HepG2 (cell line): ENCODE measurements at regions of chr16 and their contacts with region 1.

Region 1: GRCh38 chr16:2251483-2252240 is at the start of gene ECI1:
- DNase-seq: peak; percentile 87
- ATAC-seq: peak; percentile 90
- H3K4me3 ChIP-seq: peak within 1 kb of the TSS; percentile 71 to 84 (median 75)
- H3K27ac ChIP-seq: peak within 1 kb of the TSS; percentile 83
- H3K4me1 ChIP-seq: peaks cover 27% of the 10 kb centered on the region
- H3K27me3 ChIP-seq: no peaks in the 10 kb centered on the region; a peak in 1 of 5 replicates
- CTCF ChIP-seq: peak; percentile 98
- EP300 ChIP-seq: peak in 1 of 2 experiments; percentile 36; a peak in 2 of 4 replicates
- POLR2A ChIP-seq: peak; percentile 85 to 95
- RAD21 ChIP-seq: peak; percentile 94
- total RNA-seq, gene ECI1: 73.8 and 82.0 TPM in 2 replicates

Region 2: GRCh38 chr16:2090777-2091546 is 160.7 kb before region 1 on chr16:
- CTCF ChIA-PET with region 1: no interaction called
- POLR2A ChIA-PET with region 1: no interaction called
- in situ Hi-C with region 1: no loop called
- intact Hi-C with region 1: no loop called
- DNase-seq: no peak
- ATAC-seq: no peak
- H3K4me3 ChIP-seq: no peak overlapping the region
- H3K27ac ChIP-seq: no peak overlapping the region
- H3K4me1 ChIP-seq: no peaks in the 10 kb centered on the region
- H3K27me3 ChIP-seq: no peaks in the 10 kb centered on the region
- CTCF ChIP-seq: no peak
- EP300 ChIP-seq: no peak
- POLR2A ChIP-seq: no peak
- RAD21 ChIP-seq: no peak

Region 3: GRCh38 chr16:2194852-2195321 is 56.8 kb before region 1 on chr16:
- CTCF ChIA-PET with region 1: interaction called, 6 read pairs
- POLR2A ChIA-PET with region 1: interaction called, 15 read pairs
- in situ Hi-C with region 1: no loop called
- intact Hi-C with region 1: loop called (anchors 5 kb)
- DNase-seq: peak; percentile 67
- ATAC-seq: peak; percentile 68
- H3K4me3 ChIP-seq: peak overlapping the region; percentile 9 to 66 (median 53); a peak in 4 of 6 replicates
- H3K27ac ChIP-seq: no peak overlapping the region
- H3K4me1 ChIP-seq: peaks cover 59% of the 10 kb centered on the region
- H3K27me3 ChIP-seq: peaks cover 2 to 33% of the 10 kb centered on the region in 2 experiments; a peak in 3 of 5 replicates
- CTCF ChIP-seq: peak; percentile 93
- EP300 ChIP-seq: no peak
- POLR2A ChIP-seq: no peak
- RAD21 ChIP-seq: peak; percentile 77

Region 4: GRCh38 chr16:2205104-2205966 is 46.3 kb before region 1 on chr16 and contains the start of gene MLST8:
- CTCF ChIA-PET with region 1: no interaction called
- POLR2A ChIA-PET with region 1: interaction called, 18 read pairs
- in situ Hi-C with region 1: no loop called
- intact Hi-C with region 1: no loop called
- DNase-seq: peak; percentile 65
- ATAC-seq: peak; percentile 52
- H3K4me3 ChIP-seq: peak within 1 kb of the TSS; percentile 71 to 96 (median 83)
- H3K27ac ChIP-seq: peak within 1 kb of the TSS; percentile 89
- H3K4me1 ChIP-seq: peaks cover 33% of the 10 kb centered on the region
- H3K27me3 ChIP-seq: 0 out of 5 replicates have a peak, but pooled peaks cover 0 to 1% of the 10 kb centered on the region in 2 experiments
- CTCF ChIP-seq: peak; percentile 38; the same call in 1 of the 2 replicates
- EP300 ChIP-seq: peak in 1 of 2 experiments; percentile 18; a peak in 1 of 4 replicates
- POLR2A ChIP-seq: peak; percentile 77 to 80
- RAD21 ChIP-seq: no peak
- total RNA-seq, gene MLST8: 25.2 and 30.8 TPM in 2 replicates

Region 5: DNA sequence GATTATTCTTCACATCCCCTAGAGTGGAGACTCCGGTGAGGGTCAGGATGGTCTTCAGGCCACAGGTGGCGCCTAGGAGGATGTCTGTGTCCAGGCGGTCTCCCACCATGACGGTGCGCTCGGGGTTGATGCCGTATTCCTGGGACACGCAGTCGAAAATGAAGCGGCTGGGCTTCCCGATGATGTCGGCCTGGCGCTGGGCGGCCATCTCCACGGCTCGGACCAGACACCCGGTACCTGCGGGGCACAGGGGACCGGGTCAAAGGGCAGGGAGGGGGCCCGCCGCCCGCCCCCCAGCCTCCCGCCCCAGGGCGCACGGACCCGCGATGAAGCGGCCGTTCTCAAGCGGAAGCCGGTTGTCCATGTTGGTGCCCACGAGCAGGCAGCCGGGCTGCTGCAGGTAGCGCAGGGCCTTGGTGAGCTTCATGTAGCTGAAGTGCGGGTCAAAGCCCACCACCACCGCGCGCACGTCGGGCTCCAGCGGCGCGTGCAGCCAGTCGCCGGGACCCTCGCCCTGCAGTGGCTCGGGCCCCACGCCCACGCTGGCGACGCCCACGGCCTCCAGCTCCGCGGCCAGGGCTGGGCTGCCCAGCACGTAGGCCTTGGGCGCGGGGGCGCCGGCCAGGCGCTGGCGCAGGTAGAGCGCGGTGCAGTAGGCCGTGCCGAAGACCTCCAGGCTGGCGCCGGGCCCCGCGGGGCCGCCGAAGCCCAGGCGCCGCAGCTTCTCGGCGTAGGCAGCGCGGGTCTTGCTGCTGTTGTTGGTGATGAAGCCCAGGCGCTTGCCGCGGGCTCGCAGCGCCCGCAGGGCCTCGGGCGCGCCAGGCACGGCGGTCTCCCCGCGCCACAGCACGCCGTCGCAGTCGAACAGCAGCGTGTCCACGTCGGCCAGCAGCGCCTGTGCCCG is 37.6 kb before region 1 on chr16:
- CTCF ChIA-PET with region 1: no interaction called
- POLR2A ChIA-PET with region 1: interaction called, 26 read pairs
- in situ Hi-C with region 1: no loop called
- intact Hi-C with region 1: no loop called
- DNase-seq: no peak
- ATAC-seq: no peak
- H3K4me3 ChIP-seq: peak overlapping the region; percentile 63 to 89 (median 69)
- H3K27ac ChIP-seq: peak overlapping the region; percentile 85
- H3K4me1 ChIP-seq: peaks cover 65% of the 10 kb centered on the region
- H3K27me3 ChIP-seq: no peaks in the 10 kb centered on the region; a peak in 1 of 5 replicates
- CTCF ChIP-seq: no peak
- EP300 ChIP-seq: no peak
- POLR2A ChIP-seq: no peak; a peak in 1 of 4 replicates
- RAD21 ChIP-seq: peak; percentile 44; the same call in 1 of the 2 replicates

Region 6: DNA sequence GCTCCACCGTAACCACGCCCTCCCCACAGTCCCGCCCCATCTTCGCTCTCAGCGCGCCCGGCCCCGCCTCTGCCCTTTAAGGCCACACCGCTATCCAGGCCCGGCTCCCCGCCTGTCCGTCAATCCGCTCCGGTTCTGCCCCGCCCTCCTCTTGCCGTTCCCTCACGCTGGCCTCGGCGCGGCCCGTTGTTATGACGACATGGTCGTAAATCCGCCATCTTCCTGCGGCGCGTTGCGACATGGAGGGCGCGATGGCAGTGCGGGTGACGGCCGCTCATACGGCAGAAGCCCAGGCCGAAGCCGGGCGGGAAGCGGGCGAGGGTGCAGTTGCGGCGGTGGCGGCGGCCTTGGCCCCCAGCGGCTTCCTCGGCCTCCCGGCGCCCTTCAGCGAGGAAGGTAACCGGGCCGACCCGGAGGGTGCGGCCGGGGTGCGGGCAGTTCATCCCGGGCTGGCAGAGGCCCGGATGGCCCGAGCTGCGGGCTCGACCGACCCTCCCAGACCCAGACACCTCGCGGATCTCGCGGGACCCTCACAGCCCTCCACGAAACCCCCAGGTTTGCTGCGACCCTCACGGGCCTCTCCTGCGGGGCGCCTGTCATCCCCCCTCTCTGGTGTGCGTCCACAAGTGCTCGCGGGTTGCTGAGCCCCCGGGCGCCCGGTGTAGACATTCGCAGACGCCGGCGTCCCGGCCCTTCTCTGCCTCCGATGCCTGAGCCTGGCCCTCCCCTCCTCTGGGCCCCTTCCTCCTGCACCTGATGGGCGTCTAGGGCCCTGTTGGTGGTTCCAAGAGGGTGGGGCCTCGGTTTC is 28.1 kb before region 1 on chr16 and contains the start of gene E4F1:
- CTCF ChIA-PET with region 1: no interaction called
- POLR2A ChIA-PET with region 1: interaction called, 56 read pairs
- in situ Hi-C with region 1: no loop called
- intact Hi-C with region 1: no loop called
- DNase-seq: peak; percentile 97
- ATAC-seq: peak; percentile 84
- H3K4me3 ChIP-seq: peak within 1 kb of the TSS; percentile 78 to 95 (median 79)
- H3K27ac ChIP-seq: peak within 1 kb of the TSS; percentile 80
- H3K4me1 ChIP-seq: peaks cover 46% of the 10 kb centered on the region
- H3K27me3 ChIP-seq: no peaks in the 10 kb centered on the region
- CTCF ChIP-seq: peak; percentile 27; the same call in 1 of the 2 replicates
- EP300 ChIP-seq: no peak
- POLR2A ChIP-seq: peak; percentile 88 to 89
- RAD21 ChIP-seq: no peak
- total RNA-seq, gene E4F1: 10.3 and 19.5 TPM in 2 replicates

Region 7: DNA sequence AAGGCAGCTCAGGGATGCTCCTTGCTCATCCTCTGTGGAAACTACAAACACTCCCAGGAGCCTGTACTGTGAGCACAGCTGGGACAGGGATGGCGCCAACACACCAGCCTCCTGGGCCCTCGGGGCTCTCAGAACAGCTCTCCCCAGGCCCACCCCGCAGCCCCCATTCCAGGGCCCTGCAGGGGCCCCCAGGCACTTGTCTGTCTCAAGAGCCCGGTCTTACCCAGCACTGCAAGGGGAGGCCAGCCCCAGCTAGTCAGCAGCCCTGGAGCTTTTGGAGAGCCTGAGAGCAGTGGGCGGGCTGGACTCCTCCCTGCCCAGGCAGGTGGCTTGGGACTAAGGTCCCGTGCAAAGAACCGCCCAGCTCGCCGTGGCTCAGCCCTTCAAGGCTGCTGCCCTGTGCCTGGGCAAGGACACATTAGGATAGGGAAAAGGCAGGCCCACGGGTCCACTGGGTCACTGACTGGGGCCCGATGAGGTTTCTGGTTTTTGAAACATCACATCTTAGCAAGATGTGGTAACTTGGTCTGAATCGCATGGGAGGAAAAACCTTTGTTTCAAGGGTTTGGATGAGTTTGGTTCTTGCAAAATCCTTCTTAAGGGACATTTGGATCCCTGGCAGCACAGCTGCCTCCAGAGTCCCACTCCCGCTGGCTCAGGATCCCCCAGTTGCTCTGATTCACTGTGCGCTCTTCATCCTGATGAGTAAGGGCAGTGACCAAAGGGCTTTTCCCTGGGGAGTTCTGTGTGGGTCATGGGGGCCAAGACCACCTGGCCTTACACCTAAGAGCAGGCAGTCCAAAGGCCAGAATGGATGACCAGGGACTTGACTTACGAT is 12.6 kb before region 1 on chr16:
- CTCF ChIA-PET with region 1: no interaction called
- POLR2A ChIA-PET with region 1: interaction called, 11 read pairs
- in situ Hi-C with region 1: no loop called
- intact Hi-C with region 1: no loop called
- DNase-seq: no peak
- ATAC-seq: peak; percentile 42
- H3K4me3 ChIP-seq: no peak overlapping the region
- H3K27ac ChIP-seq: peak overlapping the region; percentile 37
- H3K4me1 ChIP-seq: peaks cover 31% of the 10 kb centered on the region
- H3K27me3 ChIP-seq: no peaks in the 10 kb centered on the region
- CTCF ChIP-seq: no peak
- EP300 ChIP-seq: no peak
- POLR2A ChIP-seq: 0 out of 4 replicates have a peak, but pooled peaks of 1 of the 2 experiments have one; percentile 12
- RAD21 ChIP-seq: no peak

Region 8: GRCh38 chr16:2267913-2268666 is 16.4 kb after region 1 on chr16 and contains the start of gene RNPS1:
- CTCF ChIA-PET with region 1: no interaction called
- POLR2A ChIA-PET with region 1: interaction called, 33 read pairs
- in situ Hi-C with region 1: no loop called
- intact Hi-C with region 1: no loop called
- DNase-seq: peak; percentile 88
- ATAC-seq: peak; percentile 91
- H3K4me3 ChIP-seq: peak within 1 kb of the TSS; percentile 74 to 95 (median 93)
- H3K27ac ChIP-seq: peak within 1 kb of the TSS; percentile 98
- H3K4me1 ChIP-seq: peaks cover 35% of the 10 kb centered on the region
- H3K27me3 ChIP-seq: no peaks in the 10 kb centered on the region
- CTCF ChIP-seq: peak; percentile 28; the same call in 1 of the 2 replicates
- EP300 ChIP-seq: no peak
- POLR2A ChIP-seq: peak; percentile 89 to 92
- RAD21 ChIP-seq: peak; percentile 21; the same call in 1 of the 2 replicates
- total RNA-seq, gene RNPS1: 126 and 127 TPM in 2 replicates

Region 9: GRCh38 chr16:2296661-2297505 is 45.2 kb after region 1 on chr16:
- CTCF ChIA-PET with region 1: no interaction called
- POLR2A ChIA-PET with region 1: no interaction called
- in situ Hi-C with region 1: no loop called
- intact Hi-C with region 1: no loop called
- DNase-seq: peak; percentile 54
- ATAC-seq: peak; percentile 75
- H3K4me3 ChIP-seq: no peak overlapping the region
- H3K27ac ChIP-seq: no peak overlapping the region
- H3K4me1 ChIP-seq: peaks cover 10% of the 10 kb centered on the region
- H3K27me3 ChIP-seq: peaks cover 10 to 33% of the 10 kb centered on the region in 2 experiments; a peak in 4 of 5 replicates
- CTCF ChIP-seq: peak; percentile 78
- EP300 ChIP-seq: no peak
- POLR2A ChIP-seq: no peak
- RAD21 ChIP-seq: no peak

Region 10: GRCh38 chr16:2329551-2329950 is 77.9 kb after region 1 on chr16:
- CTCF ChIA-PET with region 1: no interaction called
- POLR2A ChIA-PET with region 1: no interaction called
- in situ Hi-C with region 1: no loop called
- intact Hi-C with region 1: no loop called
- DNase-seq: no peak
- ATAC-seq: peak; percentile 63
- H3K4me3 ChIP-seq: no peak overlapping the region
- H3K27ac ChIP-seq: no peak overlapping the region
- H3K4me1 ChIP-seq: no peaks in the 10 kb centered on the region
- H3K27me3 ChIP-seq: peaks cover 13 to 77% of the 10 kb centered on the region in 2 experiments
- CTCF ChIP-seq: no peak
- EP300 ChIP-seq: no peak
- POLR2A ChIP-seq: no peak
- RAD21 ChIP-seq: no peak

Region 11: DNA sequence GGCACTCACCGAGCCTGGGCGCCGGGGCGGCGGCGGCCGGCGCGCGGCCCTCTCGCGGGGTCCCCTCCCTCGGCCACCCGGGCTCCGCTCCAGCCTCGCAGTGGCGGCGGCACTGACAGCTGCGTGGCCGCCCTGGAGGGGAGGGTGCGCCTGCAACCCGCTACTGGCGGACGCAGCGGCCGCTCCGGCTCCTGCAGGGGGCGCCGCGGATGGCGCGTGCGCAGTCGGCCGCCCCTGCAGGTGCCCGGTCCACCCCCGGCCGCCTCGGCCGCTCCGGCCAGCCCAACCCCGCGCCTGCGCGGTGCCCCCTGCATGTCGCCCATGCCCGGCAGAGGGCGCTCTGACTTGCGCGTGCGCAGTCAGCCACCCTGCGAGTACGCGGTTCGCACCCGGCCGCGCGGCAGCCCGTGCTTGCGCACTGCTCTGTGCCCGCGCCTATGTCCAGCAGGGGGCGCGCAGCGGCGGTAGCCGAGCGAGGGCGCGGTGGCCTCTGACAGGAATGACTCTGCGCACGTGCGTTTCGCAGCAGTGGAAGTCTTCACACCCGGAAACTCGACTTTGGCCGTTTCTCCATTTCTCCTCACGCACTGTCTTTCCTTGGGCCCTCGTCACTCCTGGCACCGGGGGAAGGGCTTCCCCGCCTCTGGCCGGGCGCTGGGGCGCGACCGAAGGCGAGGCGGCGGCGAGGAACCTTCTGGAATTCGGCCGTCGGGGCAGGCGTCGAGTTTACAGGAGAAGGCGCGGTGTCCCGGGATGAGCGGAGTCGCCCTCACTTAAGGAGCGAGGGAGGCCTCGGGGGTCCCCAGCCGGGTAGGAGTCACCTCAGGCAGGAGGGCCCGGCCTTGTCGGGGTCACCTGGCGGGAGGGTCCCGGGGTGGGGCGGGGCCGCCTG is 89.1 kb after region 1 on chr16 and contains the start of gene ABCA3:
- CTCF ChIA-PET with region 1: no interaction called
- POLR2A ChIA-PET with region 1: no interaction called
- in situ Hi-C with region 1: no loop called
- intact Hi-C with region 1: no loop called
- DNase-seq: peak; percentile 84
- ATAC-seq: peak; percentile 90
- H3K4me3 ChIP-seq: peak within 1 kb of the TSS; percentile 43 to 78 (median 65)
- H3K27ac ChIP-seq: no peak within 1 kb of the TSS
- H3K4me1 ChIP-seq: peaks cover 11% of the 10 kb centered on the region
- H3K27me3 ChIP-seq: peaks cover 6 to 38% of the 10 kb centered on the region in 2 experiments
- CTCF ChIP-seq: peak; percentile 98
- EP300 ChIP-seq: peak in 1 of 2 experiments; percentile 51; a peak in 1 of 4 replicates
- POLR2A ChIP-seq: no peak
- RAD21 ChIP-seq: peak; percentile 95
- total RNA-seq, gene ABCA3: 0.41 and 0.60 TPM in 2 replicates